Mammary epithelial cell (primary cell): ENCODE measurements at regions of chr12 and their contacts with region 1.

Region 1: GRCh38 chr12:949453-950191 is at the start of gene RAD52:
- DNase-seq: peak; percentile 98
- H3K4me3 ChIP-seq: peak within 1 kb of the TSS; percentile 56 to 89 (median 68)
- H3K27ac ChIP-seq: peak within 1 kb of the TSS; percentile 62
- H3K4me1 ChIP-seq: peaks cover 18% of the 10 kb centered on the region
- H3K27me3 ChIP-seq: no peaks in the 10 kb centered on the region
- CTCF ChIP-seq: peak; percentile 64 to 93
- total RNA-seq, gene RAD52: 11.7 to 16.5 TPM

Region 2: GRCh38 chr12:575948-576612 is 373.5 kb before region 1 on chr12:
- CTCF ChIA-PET with region 1: interaction called, 5 read pairs
- dilution Hi-C with region 1: no loop called
- in situ Hi-C with region 1: loop called (anchors 10 to 25 kb)
- intact Hi-C with region 1: loop called (anchors 1 kb)
- DNase-seq: peak; percentile 64
- H3K4me3 ChIP-seq: no peak overlapping the region
- H3K27ac ChIP-seq: peak overlapping the region; percentile 85
- H3K4me1 ChIP-seq: peaks cover 39% of the 10 kb centered on the region
- H3K27me3 ChIP-seq: no peaks in the 10 kb centered on the region
- CTCF ChIP-seq: peak; percentile 89 to 98

Region 3: DNA sequence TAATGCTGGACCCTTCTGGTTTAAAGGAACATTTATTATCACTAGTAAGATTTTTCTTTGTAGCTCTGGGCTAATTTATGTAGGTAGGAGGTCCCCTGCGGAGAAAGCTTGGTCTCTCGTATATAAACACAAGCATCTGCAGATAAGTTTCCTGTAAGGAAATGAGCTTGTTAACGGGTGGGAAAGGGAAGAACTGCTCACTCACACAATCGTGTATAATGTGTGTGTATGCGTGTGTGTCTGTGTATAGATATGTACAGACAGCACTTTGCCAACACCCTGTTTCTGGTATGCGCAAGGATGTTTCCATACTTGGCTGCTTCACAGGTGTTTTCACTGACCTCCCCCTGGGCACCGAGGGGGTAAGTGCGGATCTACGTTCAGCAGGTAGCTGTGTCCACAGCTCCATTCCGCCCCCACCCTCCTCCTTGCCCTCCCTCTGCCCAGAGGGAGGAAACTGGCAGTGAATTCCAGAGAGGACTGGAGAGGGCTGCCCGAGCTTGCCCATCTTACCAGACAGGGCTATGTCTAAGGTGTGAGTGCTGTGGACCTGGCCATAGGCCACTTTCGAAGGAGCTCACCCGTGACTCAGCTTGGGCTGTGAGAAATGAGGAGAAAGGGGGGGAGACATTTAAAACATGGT is 351.6 kb before region 1 on chr12:
- CTCF ChIA-PET with region 1: no interaction called
- dilution Hi-C with region 1: no loop called
- in situ Hi-C with region 1: no loop called
- intact Hi-C with region 1: loop called (anchors 1 kb)
- DNase-seq: peak; percentile 90
- H3K4me3 ChIP-seq: no peak overlapping the region
- H3K27ac ChIP-seq: peak overlapping the region; percentile 63
- H3K4me1 ChIP-seq: peaks cover 19% of the 10 kb centered on the region
- H3K27me3 ChIP-seq: no peaks in the 10 kb centered on the region
- CTCF ChIP-seq: no peak

Region 4: GRCh38 chr12:751192-751998 is 198.2 kb before region 1 on chr12:
- CTCF ChIA-PET with region 1: no interaction called
- dilution Hi-C with region 1: no loop called
- in situ Hi-C with region 1: no loop called
- intact Hi-C with region 1: loop called (anchors 10 kb)
- DNase-seq: peak; percentile 92
- H3K4me3 ChIP-seq: peak overlapping the region; percentile 49 to 58 (median 57)
- H3K27ac ChIP-seq: peak overlapping the region; percentile 59
- H3K4me1 ChIP-seq: peaks cover 14% of the 10 kb centered on the region
- H3K27me3 ChIP-seq: no peaks in the 10 kb centered on the region
- CTCF ChIP-seq: peak; percentile 63 to 80

Region 5: GRCh38 chr12:810671-811415 is 138.8 kb before region 1 on chr12:
- CTCF ChIA-PET with region 1: no interaction called
- dilution Hi-C with region 1: no loop called
- in situ Hi-C with region 1: no loop called
- intact Hi-C with region 1: loop called (anchors 1 kb)
- DNase-seq: no peak
- H3K4me3 ChIP-seq: no peak overlapping the region
- H3K27ac ChIP-seq: no peak overlapping the region
- H3K4me1 ChIP-seq: no peaks in the 10 kb centered on the region
- H3K27me3 ChIP-seq: no peaks in the 10 kb centered on the region
- CTCF ChIP-seq: no peak

Region 6: GRCh38 chr12:990661-991349 is 41.2 kb after region 1 on chr12 and contains the start of gene ERC1:
- CTCF ChIA-PET with region 1: no interaction called
- dilution Hi-C with region 1: no loop called
- in situ Hi-C with region 1: no loop called
- intact Hi-C with region 1: loop called (anchors 2 kb)
- DNase-seq: peak; percentile 85
- H3K4me3 ChIP-seq: peak within 1 kb of the TSS; percentile 80 to 93 (median 90)
- H3K27ac ChIP-seq: peak within 1 kb of the TSS; percentile 92
- H3K4me1 ChIP-seq: peaks cover 25% of the 10 kb centered on the region
- H3K27me3 ChIP-seq: no peaks in the 10 kb centered on the region
- CTCF ChIP-seq: no peak
- total RNA-seq, gene ERC1: 41.0 to 88.7 TPM

Region 7: GRCh38 chr12:1093166-1093751 is 143.6 kb after region 1 on chr12:
- CTCF ChIA-PET with region 1: interaction called, 10 read pairs
- dilution Hi-C with region 1: no loop called
- in situ Hi-C with region 1: no loop called
- intact Hi-C with region 1: loop called (anchors 5 kb)
- DNase-seq: peak; percentile 45
- H3K4me3 ChIP-seq: no peak overlapping the region
- H3K27ac ChIP-seq: no peak overlapping the region
- H3K4me1 ChIP-seq: no peaks in the 10 kb centered on the region
- H3K27me3 ChIP-seq: no peaks in the 10 kb centered on the region
- CTCF ChIP-seq: peak; percentile 70 to 82

Region 8: DNA sequence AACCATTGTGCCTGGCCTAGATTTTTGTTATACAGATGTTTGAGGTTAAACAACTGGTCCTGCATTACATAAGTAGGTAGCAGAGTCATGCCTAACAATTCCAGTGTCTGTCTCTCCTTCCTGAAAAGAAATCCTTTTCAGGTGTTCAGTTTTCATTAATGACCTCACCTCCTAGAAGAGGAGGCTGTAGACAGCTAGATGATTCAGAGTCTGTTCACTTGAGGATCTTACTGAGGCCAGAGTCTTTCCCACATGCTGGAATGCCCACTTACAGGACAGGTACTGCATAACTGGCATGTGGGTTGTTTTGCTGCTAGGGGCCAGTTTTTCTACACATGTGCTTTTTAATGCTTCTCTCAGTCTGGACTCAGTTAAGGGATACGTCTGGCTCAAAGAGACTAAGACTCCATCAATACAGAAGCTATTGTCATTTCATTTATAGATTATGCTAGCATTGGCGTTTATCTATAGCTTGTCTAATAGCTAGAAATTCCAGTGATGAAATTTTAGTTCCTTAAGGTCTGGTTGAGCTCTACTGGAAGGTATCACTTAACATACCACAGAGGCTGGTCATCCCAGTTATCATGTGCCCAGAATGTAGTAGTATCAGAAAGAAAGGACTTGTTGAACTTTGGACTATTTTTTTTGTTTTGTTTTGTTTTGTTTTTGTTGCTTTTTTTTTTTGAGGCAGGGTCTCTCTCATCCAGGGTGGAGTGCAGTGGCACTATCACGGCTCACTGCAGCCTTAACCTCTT is 247.8 kb after region 1 on chr12:
- CTCF ChIA-PET with region 1: no interaction called
- dilution Hi-C with region 1: no loop called
- in situ Hi-C with region 1: no loop called
- intact Hi-C with region 1: no loop called
- DNase-seq: peak; percentile 96
- H3K4me3 ChIP-seq: no peak overlapping the region
- H3K27ac ChIP-seq: peak overlapping the region; percentile 82
- H3K4me1 ChIP-seq: peaks cover 27% of the 10 kb centered on the region
- H3K27me3 ChIP-seq: no peaks in the 10 kb centered on the region
- CTCF ChIP-seq: no peak